B cell (primary cell): ENCODE measurements at regions of chr16 and their contacts with region 1.

Region 1: DNA sequence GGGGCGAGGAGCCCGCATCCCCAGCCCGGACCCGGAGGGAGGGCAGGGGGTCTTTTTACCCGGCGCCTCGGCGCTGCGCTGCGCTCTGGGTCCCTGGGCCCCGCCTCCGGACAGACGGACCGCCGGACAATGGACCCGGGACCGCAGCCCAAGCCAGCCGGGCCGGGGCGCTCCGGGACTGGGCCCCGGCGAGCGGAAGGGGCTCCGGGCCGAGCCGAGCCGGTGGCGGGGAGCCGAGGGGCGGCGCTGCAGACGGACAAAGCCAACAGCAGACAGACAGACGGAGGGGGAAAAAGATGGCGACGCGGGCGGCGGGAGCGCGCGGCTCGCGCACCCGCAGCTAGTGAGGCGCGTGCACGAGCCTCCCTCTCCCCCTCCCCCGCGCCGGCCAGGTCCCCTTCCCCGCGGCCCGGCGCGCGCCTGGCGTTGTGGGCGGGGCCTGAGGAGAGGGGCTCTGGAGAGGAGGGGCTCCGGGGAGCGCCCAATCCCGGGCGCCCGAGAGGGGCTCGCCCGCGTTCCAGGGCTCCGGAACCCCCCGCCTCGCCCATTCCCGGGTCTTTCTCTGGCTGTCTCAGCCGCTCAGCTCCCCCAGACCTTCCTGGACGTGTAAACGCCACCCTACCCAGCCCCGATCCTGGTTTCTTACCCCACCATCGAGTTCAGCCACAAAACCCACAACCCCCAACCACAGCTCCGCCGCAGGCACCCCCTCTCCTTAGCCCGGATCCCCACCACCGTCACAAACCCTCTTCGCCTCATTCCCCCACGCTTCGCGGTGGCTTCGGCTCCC is at the start of gene ZNF821:
- DNase-seq: peak; percentile 89
- ATAC-seq: peak; percentile 69
- H3K4me3 ChIP-seq: peak within 1 kb of the TSS; percentile 76 to 98 (median 86)
- H3K4me3 Mint-ChIP-seq: peak within 1 kb of the TSS; percentile 96
- H3K27ac ChIP-seq: peak within 1 kb of the TSS; percentile 89 to 91
- H3K27ac Mint-ChIP-seq: peak within 1 kb of the TSS; percentile 96
- H3K4me1 ChIP-seq: peaks cover 33 to 43% of the 10 kb centered on the region in 2 donors
- H3K4me1 Mint-ChIP-seq: peaks cover 43% of the 10 kb centered on the region
- H3K27me3 ChIP-seq: no peaks in the 10 kb centered on the region
- H3K27me3 Mint-ChIP-seq: no peaks in the 10 kb centered on the region
- CTCF ChIP-seq: peak; percentile 66
- total RNA-seq, gene ZNF821: 31.2 and 35.6 TPM in 2 replicates

Region 2: GRCh38 chr16:71845639-71846430 is 38.2 kb before region 1 on chr16 and contains the start of gene ATXN1L:
- CTCF ChIA-PET with region 1: interaction called, 11 read pairs
- POLR2A ChIA-PET with region 1: interaction called, 5 read pairs
- intact Hi-C with region 1: loop called (anchors 1 kb)
- DNase-seq: peak; percentile 95
- ATAC-seq: peak; percentile 87
- H3K4me3 ChIP-seq: peak within 1 kb of the TSS; percentile 63 to 99 (median 92)
- H3K4me3 Mint-ChIP-seq: peak within 1 kb of the TSS; percentile 92
- H3K27ac ChIP-seq: peak within 1 kb of the TSS; percentile 94 to 95
- H3K27ac Mint-ChIP-seq: peak within 1 kb of the TSS; percentile 98
- H3K4me1 ChIP-seq: peaks cover 29 to 52% of the 10 kb centered on the region in 2 donors
- H3K4me1 Mint-ChIP-seq: peaks cover 50% of the 10 kb centered on the region
- H3K27me3 ChIP-seq: no peaks in the 10 kb centered on the region
- H3K27me3 Mint-ChIP-seq: no peaks in the 10 kb centered on the region
- CTCF ChIP-seq: no peak
- total RNA-seq, gene ATXN1L: 38.4 and 39.5 TPM in 2 replicates

Region 3: GRCh38 chr16:71873199-71873598 is 10.8 kb before region 1 on chr16:
- CTCF ChIA-PET with region 1: interaction called, 15 read pairs
- POLR2A ChIA-PET with region 1: interaction called, 6 read pairs
- intact Hi-C with region 1: no loop called
- DNase-seq: no peak
- ATAC-seq: no peak
- H3K4me3 ChIP-seq: no peak overlapping the region
- H3K4me3 Mint-ChIP-seq: no peak overlapping the region
- H3K27ac ChIP-seq: no peak overlapping the region
- H3K27ac Mint-ChIP-seq: peak overlapping the region; percentile 53
- H3K4me1 ChIP-seq: no peaks in the 10 kb centered on the region
- H3K4me1 Mint-ChIP-seq: peaks cover 3% of the 10 kb centered on the region
- H3K27me3 ChIP-seq: no peaks in the 10 kb centered on the region
- H3K27me3 Mint-ChIP-seq: no peaks in the 10 kb centered on the region
- CTCF ChIP-seq: no peak

Region 4: DNA sequence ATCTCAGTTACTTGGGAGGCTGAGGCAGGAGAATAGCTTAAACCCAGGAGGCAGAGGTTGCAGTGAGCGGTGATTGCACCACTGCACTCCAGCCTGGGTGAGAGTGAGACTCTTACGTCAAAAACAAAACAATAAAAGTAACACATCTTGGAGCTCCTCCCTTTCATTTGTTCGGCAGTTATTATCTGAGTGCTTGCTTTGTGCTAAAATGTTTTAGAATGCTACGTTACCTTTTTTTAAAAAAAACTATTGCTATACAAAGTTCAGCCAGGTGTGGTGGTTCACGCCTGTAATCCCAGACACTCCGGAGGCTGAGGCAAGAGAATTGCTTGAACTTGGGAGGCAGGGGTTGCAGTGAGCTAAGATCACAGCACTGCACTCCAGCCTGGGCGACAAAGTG is 27.1 kb after region 1 on chr16:
- CTCF ChIA-PET with region 1: interaction called, 12 read pairs
- POLR2A ChIA-PET with region 1: interaction called, 3 read pairs
- intact Hi-C with region 1: no loop called
- DNase-seq: no peak
- ATAC-seq: no peak
- H3K4me3 ChIP-seq: no peak overlapping the region
- H3K4me3 Mint-ChIP-seq: no peak overlapping the region
- H3K27ac ChIP-seq: no peak overlapping the region
- H3K27ac Mint-ChIP-seq: no peak overlapping the region
- H3K4me1 ChIP-seq: peaks cover 9 to 17% of the 10 kb centered on the region in 2 donors
- H3K4me1 Mint-ChIP-seq: peaks cover 54% of the 10 kb centered on the region
- H3K27me3 ChIP-seq: no peaks in the 10 kb centered on the region
- H3K27me3 Mint-ChIP-seq: no peaks in the 10 kb centered on the region
- CTCF ChIP-seq: no peak

Region 5: DNA sequence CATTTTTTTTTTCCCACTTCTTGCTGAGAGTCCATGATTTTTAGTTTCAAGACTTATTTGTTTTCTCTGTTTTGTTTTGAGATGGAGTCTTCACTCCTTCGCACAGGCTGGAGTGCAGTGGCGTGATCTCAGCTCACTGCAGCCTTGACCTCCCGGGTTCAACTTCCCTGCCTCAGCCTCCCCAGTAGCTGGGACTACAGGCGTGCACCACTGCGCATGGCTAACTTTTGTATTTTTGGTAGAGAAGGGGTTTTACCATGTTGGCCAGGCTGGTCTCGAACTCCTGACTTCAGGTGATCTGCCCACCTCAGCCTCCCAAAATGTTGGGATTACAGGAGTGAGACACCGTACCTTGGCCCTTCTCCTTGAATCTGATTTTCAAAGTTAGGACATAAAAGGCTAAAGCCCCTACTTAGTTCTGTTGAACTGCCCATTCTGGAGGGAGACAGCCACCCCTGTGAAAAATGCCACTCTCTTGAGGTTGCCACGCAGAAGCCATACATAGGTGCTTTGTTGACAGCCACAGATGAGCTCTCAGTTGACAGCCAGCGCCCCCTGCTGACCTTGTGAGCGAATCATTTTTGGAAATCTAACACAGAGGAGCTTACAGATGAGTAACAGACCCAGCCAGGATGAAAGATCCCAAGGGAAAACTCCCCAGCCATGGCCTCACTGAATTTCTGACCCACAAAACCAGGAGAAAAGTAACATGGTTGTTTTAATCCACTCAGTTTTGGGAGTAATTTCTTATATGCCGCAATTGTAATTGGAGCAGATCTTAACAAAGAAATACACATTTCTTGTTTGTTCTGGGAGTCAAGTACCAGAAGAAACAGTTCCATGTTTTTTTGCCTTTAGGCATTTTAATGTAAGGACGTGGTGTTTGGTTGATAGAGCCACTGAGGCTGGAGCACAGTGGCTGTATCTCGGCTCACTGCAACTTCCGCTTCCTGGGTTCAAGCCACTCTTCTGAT is 77.3 kb after region 1 on chr16:
- CTCF ChIA-PET with region 1: interaction called, 15 read pairs
- POLR2A ChIA-PET with region 1: no interaction called
- intact Hi-C with region 1: loop called (anchors 1 kb)
- DNase-seq: peak; percentile 84
- ATAC-seq: peak; percentile 82
- H3K4me3 ChIP-seq: no peak overlapping the region
- H3K4me3 Mint-ChIP-seq: no peak overlapping the region
- H3K27ac ChIP-seq: no peak overlapping the region
- H3K27ac Mint-ChIP-seq: no peak overlapping the region
- H3K4me1 ChIP-seq: peaks cover 13 to 18% of the 10 kb centered on the region in 2 donors
- H3K4me1 Mint-ChIP-seq: peaks cover 24% of the 10 kb centered on the region
- H3K27me3 ChIP-seq: no peaks in the 10 kb centered on the region
- H3K27me3 Mint-ChIP-seq: no peaks in the 10 kb centered on the region
- CTCF ChIP-seq: peak; percentile 85